Panc1 (cell line): ENCODE measurements at regions of chr2 and their contacts with region 1.

Region 1: DNA sequence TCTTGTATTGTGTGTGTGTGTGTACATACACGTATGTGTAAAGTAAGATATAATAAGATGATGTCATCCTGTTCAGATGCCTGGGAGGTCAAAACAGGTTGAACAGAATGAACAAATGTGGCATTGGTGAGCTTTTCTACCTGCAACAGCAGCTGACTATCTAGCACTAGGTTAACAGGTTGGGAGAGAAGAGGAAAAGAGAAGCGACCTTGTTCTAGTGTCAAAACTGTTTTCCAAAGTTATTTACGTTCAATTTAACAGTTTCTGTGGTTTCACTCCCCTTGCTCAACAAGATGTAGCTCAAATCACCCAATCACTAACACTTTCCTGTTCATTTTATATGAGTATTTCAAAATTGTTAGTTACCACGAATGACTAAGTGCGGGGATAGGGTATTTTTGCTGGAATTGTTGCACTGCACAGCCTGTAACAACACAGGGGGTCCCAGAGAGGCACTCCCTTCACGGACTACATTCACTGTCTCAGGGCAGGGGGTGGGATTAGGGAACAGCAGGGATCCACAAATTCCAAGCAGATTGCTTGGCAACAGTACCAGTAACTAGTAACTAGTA is 67.5 kb upstream of the DTNB start:
- DNase-seq: no peak
- ATAC-seq: no peak
- H3K4me3 ChIP-seq: no peak overlapping the region
- H3K27ac ChIP-seq: no peak overlapping the region
- H3K4me1 ChIP-seq: no peaks in the 10 kb centered on the region
- H3K27me3 ChIP-seq: no peaks in the 10 kb centered on the region
- CTCF ChIP-seq: no peak

Region 2: GRCh38 chr2:25517701-25518100 is 223.2 kb before region 1 on chr2:
- CTCF ChIA-PET with region 1: no interaction called
- POLR2A ChIA-PET with region 1: interaction called, 13 read pairs
- in situ Hi-C with region 1: no loop called
- intact Hi-C with region 1: no loop called
- DNase-seq: no peak
- ATAC-seq: no peak
- H3K4me3 ChIP-seq: no peak overlapping the region
- H3K27ac ChIP-seq: no peak overlapping the region
- H3K4me1 ChIP-seq: no peaks in the 10 kb centered on the region; the same call in 1 of the 2 replicates
- H3K27me3 ChIP-seq: no peaks in the 10 kb centered on the region
- CTCF ChIP-seq: no peak

Region 3: DNA sequence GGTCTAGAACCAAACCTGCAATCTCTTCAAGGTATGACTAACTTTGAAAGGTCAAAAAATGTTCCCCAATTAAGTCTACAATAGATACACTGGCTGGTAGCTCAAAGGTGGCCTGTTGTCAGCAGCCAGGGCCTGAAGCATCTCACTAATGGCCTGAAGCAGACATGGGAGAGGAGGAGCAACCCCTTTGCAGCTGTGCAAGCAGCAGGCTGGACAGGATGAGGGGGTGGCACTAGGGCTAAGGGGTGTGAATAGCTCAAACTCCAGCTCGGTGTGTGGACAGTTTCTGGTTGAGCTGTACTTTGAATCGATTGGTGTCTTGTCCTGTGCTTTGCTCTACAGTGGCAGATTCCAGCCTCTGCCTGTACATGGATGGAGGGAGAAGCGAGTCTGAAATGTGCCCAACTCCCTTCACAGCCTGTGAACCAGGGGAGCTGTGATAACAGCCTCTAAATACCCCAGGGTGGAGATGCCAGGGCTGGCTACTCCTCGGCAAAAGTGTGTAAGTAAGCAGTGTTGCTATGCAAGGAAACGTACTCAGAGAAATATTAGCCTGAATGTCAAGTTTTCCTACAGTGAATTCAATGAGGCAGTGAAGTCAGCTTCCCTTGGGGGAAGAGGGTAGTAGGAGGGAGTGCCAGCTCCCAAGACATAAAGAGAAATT is 32.8 kb before region 1 on chr2:
- CTCF ChIA-PET with region 1: no interaction called
- POLR2A ChIA-PET with region 1: interaction called, 10 read pairs
- in situ Hi-C with region 1: no loop called
- intact Hi-C with region 1: no loop called
- DNase-seq: no peak
- ATAC-seq: peak; percentile 68
- H3K4me3 ChIP-seq: no peak overlapping the region
- H3K27ac ChIP-seq: no peak overlapping the region
- H3K4me1 ChIP-seq: no peaks in the 10 kb centered on the region
- H3K27me3 ChIP-seq: no peaks in the 10 kb centered on the region
- CTCF ChIP-seq: no peak

Region 4: GRCh38 chr2:25912851-25913695 is 172.2 kb after region 1 on chr2:
- CTCF ChIA-PET with region 1: no interaction called
- POLR2A ChIA-PET with region 1: no interaction called
- in situ Hi-C with region 1: no loop called
- intact Hi-C with region 1: no loop called
- DNase-seq: no peak
- ATAC-seq: peak; percentile 75
- H3K4me3 ChIP-seq: no peak overlapping the region
- H3K27ac ChIP-seq: no peak overlapping the region
- H3K4me1 ChIP-seq: peaks cover 7% of the 10 kb centered on the region; the same call in 1 of the 2 replicates
- H3K27me3 ChIP-seq: no peaks in the 10 kb centered on the region
- CTCF ChIP-seq: no peak